Aorta (tissue), 5 donors: ENCODE measurements at regions of chr3 and their contacts with region 1.

Region 1: DNA sequence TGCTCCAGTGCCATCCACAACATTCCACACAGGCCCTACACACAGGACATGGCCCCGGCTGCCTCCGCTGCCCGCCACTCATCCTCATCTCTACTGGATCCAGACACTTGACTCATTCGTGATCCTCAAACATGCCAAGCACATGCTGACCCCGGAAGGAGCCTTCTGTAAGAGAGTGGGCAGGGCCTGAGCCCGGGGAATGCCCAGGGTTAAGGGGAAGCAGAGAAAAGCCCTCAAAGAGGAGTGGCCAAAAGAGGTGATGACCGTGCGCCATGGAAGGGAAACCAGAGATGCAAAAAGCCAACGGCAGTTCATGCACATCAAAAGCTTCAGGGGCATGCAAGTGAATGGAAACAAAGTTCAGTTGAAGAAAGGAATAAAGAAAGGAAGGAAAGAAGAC is 46.1 kb downstream of the RFTN1 start:
- DNase-seq: peak in 1 of 2 donors; percentile 57
- ATAC-seq: no peak
- H3K4me3 ChIP-seq: no peak overlapping the region
- H3K27ac ChIP-seq: peak overlapping the region in 1 of 2 donors; percentile 7
- H3K4me1 ChIP-seq: peaks cover 11 to 13% of the 10 kb centered on the region in 2 donors
- H3K27me3 ChIP-seq: no peaks in the 10 kb centered on the region

Region 2: DNA sequence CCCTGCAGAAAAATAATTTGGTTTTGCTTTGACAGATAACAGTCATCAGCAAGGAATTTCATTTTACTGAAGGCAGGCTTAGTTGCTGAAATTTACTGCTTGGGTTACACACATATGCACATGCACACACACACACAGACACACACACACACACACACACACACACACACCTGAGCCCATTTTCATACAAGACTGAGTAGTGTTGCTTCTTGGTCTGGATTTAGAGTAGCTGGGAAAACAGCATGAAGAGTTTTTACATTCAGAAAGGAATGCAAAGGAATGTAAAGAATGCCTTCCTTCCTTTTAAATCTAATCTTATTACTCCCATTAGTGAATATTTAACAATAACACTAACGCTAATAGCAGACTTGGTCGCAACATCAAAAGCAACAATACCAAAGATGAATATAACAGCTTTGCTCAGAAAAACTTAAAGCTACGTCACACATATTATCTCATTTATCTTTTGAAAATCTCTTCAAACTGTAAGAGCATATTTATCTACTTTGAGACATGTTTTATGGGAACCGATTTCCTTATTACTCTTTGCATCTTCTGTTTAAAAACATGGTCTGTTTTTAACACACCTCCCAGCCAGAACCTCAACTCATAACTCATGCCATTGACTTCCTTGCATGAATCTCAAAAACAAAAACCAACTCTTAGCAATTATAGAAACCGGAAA is 13.6 kb after region 1 on chr3:
- intact Hi-C with region 1: loop called in 1 of 2 experiments (anchors 1 kb)
- DNase-seq: no peak
- ATAC-seq: no peak
- H3K4me3 ChIP-seq: no peak overlapping the region
- H3K27ac ChIP-seq: no peak overlapping the region
- H3K4me1 ChIP-seq: peaks cover 0 to 4% of the 10 kb centered on the region in 2 donors
- H3K27me3 ChIP-seq: no peaks in the 10 kb centered on the region